ENCODE measurements at regions of chr2 and their contacts with region 1.

Region 1: GRCh38 chr2:237858294-237859081 is 935 bp upstream of the RAMP1 start:
- DNase-seq: peak; percentile 65 to 80 (median 67)
- ATAC-seq: peak; percentile 77 to 85 (median 81)
- H3K4me3 ChIP-seq: peak overlapping the region in 8 of 12 donors; percentile 51 to 71 (median 62)
- H3K27ac ChIP-seq: peak overlapping the region in 11 of 12 donors; percentile 79 to 97 (median 90)
- H3K4me1 ChIP-seq: peaks cover 0 to 33% (median 10%) of the 10 kb centered on the region in 12 donors
- H3K27me3 ChIP-seq: peaks cover 0 to 32% (median 0%) of the 10 kb centered on the region in 9 donors
- CTCF ChIP-seq: peak; percentile 61 to 78 (median 71)
- POLR2A ChIP-seq: no peak

Region 2: DNA sequence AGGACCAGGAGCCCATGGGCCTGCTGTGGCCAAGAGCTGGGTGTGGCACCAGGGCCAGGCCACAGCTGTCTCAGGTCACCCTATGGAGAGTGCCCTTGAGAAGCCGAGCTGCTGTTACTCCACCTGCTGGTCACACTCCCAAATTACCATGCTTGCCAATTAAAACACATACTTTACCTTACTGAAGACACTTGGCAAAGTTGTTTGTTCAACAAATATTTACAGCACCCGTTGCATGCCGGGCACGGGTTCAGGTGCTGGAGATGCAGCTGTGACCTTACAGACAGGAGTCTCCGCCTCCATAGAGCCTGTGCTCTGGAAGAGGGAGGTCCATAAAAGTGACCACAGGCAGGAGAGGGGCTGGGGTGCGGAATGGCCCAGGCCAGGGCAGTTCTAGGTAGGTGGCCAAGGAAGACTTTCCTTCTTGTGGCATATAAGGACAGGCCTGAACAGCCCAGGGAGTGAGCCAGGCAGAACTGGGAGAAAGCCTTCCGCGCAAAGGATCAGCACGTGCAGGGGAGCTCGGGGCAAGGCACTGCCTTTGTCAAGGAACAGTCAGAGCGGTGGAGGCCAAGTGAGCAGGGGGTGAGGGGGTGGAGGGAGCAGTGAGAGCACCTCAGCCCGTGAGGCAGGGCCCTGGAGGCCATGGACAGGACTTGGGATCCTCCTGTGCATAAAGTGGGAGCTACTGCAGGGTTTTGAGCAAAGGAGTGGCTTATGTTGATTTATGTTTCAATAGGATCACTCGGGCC is 83.5 kb before region 1 on chr2:
- intact Hi-C with region 1: no loop called
- DNase-seq: peak in 2 of 5 donors; percentile 48 to 49
- ATAC-seq: peak; percentile 46 to 83 (median 78)
- H3K4me3 ChIP-seq: no peak overlapping the region
- H3K27ac ChIP-seq: peak overlapping the region in 1 of 12 donors; percentile 20
- H3K4me1 ChIP-seq: peaks cover 0 to 12% (median 0%) of the 10 kb centered on the region in 12 donors
- H3K27me3 ChIP-seq: no peaks in the 10 kb centered on the region
- CTCF ChIP-seq: peak; percentile 43 to 71 (median 58)
- POLR2A ChIP-seq: no peak

Region 3: GRCh38 chr2:237886685-237887481 is 28.4 kb after region 1 on chr2:
- intact Hi-C with region 1: loop called in 1 of 10 experiments (anchors 1 kb)
- DNase-seq: peak; percentile 87 to 97 (median 89)
- ATAC-seq: peak; percentile 86 to 90 (median 88)
- H3K4me3 ChIP-seq: no peak overlapping the region
- H3K27ac ChIP-seq: peak overlapping the region; percentile 65 to 100 (median 92)
- H3K4me1 ChIP-seq: peaks cover 0 to 46% (median 18%) of the 10 kb centered on the region in 12 donors
- H3K27me3 ChIP-seq: no peaks in the 10 kb centered on the region
- CTCF ChIP-seq: no peak
- POLR2A ChIP-seq: no peak

Region 4: GRCh38 chr2:237966565-237967462 is 108.3 kb after region 1 on chr2 and contains the start of gene UBE2F:
- intact Hi-C with region 1: loop called in 5 of 10 experiments (anchors 2 to 5 kb)
- DNase-seq: peak; percentile 97 to 99 (median 98)
- ATAC-seq: peak; percentile 97 to 98 (median 98)
- H3K4me3 ChIP-seq: peak within 1 kb of the TSS; percentile 62 to 94 (median 72)
- H3K27ac ChIP-seq: peak within 1 kb of the TSS in 11 of 12 donors; percentile 51 to 88 (median 77)
- H3K4me1 ChIP-seq: peaks cover 4 to 44% (median 29%) of the 10 kb centered on the region in 12 donors
- H3K27me3 ChIP-seq: no peaks in the 10 kb centered on the region
- CTCF ChIP-seq: no peak
- POLR2A ChIP-seq: peak in 1 of 2 donors; percentile 84
- total RNA-seq, gene UBE2F: 54.2 to 73.8 (median 60.6) TPM

Region 5: DNA sequence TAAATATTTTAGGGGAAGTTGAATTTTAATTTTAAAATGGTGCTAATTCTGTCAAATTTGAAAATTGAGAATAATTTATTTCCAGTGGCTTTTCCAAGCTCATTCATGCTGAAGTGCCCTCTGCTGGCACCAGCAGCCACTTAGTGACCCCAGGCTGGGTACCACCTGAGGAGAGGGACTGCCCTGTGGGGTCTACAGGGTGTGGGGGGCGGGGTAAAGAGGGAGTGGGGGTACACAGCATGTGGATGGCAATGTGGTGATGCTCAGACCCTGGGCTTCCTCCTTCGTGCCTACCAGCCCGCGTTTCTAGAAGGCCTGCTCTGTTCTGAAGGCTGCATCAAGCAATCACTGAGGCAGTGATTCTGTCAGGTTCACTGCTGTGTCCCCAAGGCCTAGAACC is 157.2 kb after region 1 on chr2:
- intact Hi-C with region 1: loop called in 1 of 10 experiments (anchors 5 kb)
- DNase-seq: no peak
- ATAC-seq: peak in 1 of 4 donors; percentile 31
- H3K4me3 ChIP-seq: no peak overlapping the region
- H3K27ac ChIP-seq: no peak overlapping the region
- H3K4me1 ChIP-seq: peaks cover 0 to 9% (median 0%) of the 10 kb centered on the region in 12 donors
- H3K27me3 ChIP-seq: no peaks in the 10 kb centered on the region
- CTCF ChIP-seq: peak in 6 of 12 donors; percentile 7 to 31 (median 14)
- POLR2A ChIP-seq: no peak

Region 6: DNA sequence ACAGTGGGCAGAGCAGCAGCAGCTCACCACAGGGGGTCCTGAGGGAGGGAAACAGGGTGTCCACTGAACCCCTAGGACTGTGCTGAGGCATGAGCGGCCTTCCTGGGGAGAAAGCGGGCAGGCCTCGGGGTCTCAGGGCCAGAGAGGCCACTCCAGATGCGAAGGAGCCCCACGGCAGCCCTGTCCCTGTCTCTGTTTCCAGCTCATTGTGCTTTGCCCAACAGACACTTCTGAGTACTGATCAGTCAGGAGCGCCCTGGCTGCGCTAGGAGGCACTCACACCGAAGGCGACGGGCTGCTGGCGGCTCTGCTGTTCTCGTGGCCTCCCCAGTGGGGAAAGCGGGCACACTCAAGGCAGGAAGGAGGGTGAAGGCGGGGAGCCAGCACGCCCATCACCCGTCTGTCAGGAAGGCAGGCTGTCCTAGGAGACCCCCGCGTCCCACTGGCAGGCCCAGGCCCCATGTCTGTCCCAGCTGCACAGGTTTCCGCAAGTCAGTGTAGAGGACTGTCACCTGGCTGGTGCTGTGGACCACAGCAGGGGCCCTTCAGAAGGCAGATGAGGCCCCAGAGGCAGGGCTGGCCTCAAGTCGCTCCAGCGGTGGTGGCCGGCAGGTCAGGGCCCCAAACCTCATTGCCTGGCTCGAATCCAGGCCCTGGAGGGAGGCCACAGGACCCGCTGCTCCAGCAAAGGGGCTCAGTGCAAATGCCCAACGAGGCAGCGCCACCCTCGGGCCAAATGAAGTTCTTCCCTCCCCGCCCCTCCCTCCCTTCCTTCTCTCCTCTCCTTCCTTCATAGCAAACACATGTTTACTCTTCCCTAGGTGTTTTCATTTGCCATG is 248.4 kb after region 1 on chr2:
- intact Hi-C with region 1: loop called in 1 of 10 experiments (anchors 10 kb)
- DNase-seq: peak in 3 of 5 donors; percentile 5 to 51 (median 12)
- ATAC-seq: no peak
- H3K4me3 ChIP-seq: no peak overlapping the region
- H3K27ac ChIP-seq: no peak overlapping the region
- H3K4me1 ChIP-seq: peaks cover 0 to 20% (median 0%) of the 10 kb centered on the region in 12 donors
- H3K27me3 ChIP-seq: peaks cover 0 to 5% (median 0%) of the 10 kb centered on the region in 9 donors
- CTCF ChIP-seq: peak in 2 of 12 donors; percentile 5 to 12
- POLR2A ChIP-seq: no peak

Region 7: GRCh38 chr2:238256594-238257104 is 398.2 kb after region 1 on chr2:
- intact Hi-C with region 1: loop called in 7 of 10 experiments (anchors 5 to 10 kb)
- DNase-seq: peak; percentile 39 to 81 (median 78)
- ATAC-seq: peak; percentile 46 to 84 (median 66)
- H3K4me3 ChIP-seq: no peak overlapping the region
- H3K27ac ChIP-seq: no peak overlapping the region
- H3K4me1 ChIP-seq: peaks cover 0 to 13% (median 4%) of the 10 kb centered on the region in 12 donors
- H3K27me3 ChIP-seq: no peaks in the 10 kb centered on the region
- CTCF ChIP-seq: peak; percentile 52 to 83 (median 67)
- POLR2A ChIP-seq: no peak